AG04450 (cell line): ENCODE measurements at regions of chr12 and their contacts with region 1.

Region 1: GRCh38 chr12:100703337-100703736 is 91.2 kb upstream of the ANO4 start:
- DNase-seq: no peak
- H3K4me3 ChIP-seq: no peak overlapping the region
- H3K27ac ChIP-seq: no peak overlapping the region
- H3K27me3 ChIP-seq: no peaks in the 10 kb centered on the region
- CTCF ChIP-seq: no peak

Region 2: GRCh38 chr12:100435957-100436356 is 267.4 kb before region 1 on chr12:
- CTCF ChIA-PET with region 1: interaction called, 11 read pairs
- POLR2A ChIA-PET with region 1: no interaction called
- DNase-seq: no peak
- H3K4me3 ChIP-seq: no peak overlapping the region
- H3K27ac ChIP-seq: no peak overlapping the region
- H3K27me3 ChIP-seq: no peaks in the 10 kb centered on the region
- CTCF ChIP-seq: no peak

Region 3: DNA sequence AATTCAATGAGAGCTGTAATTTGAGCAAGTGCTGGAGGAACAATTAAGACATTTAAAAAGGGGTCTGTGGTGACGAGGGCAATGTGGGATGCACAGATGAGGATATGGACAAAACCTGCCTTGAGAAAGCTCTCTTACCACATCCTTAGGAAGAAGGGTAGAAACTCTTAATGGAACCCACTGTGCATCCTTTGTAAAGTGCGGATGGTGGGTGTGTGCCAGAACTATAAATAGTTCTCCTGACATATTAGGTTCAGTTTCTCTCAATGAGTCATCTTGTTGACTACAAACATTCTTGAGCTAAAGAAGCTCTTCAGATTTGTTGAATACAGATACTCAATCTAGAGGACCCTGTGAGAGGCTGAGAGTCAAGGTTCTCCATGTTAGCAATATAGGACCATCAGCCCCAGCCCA is 14.9 kb before region 1 on chr12:
- CTCF ChIA-PET with region 1: no interaction called
- POLR2A ChIA-PET with region 1: no interaction called
- DNase-seq: no peak
- H3K4me3 ChIP-seq: no peak overlapping the region
- H3K27ac ChIP-seq: no peak overlapping the region
- H3K27me3 ChIP-seq: no peaks in the 10 kb centered on the region
- CTCF ChIP-seq: no peak